Ascending aorta (tissue), 2 donors: ENCODE measurements at regions of chr3 and their contacts with region 1.

Region 1: GRCh38 chr3:66407611-66408218 is 93.1 kb downstream of the LRIG1 start:
- DNase-seq: peak in 1 of 2 donors; percentile 82
- H3K4me3 ChIP-seq: no peak overlapping the region
- H3K27ac ChIP-seq: peak overlapping the region; percentile 80 to 93
- H3K4me1 ChIP-seq: peaks cover 19 to 55% of the 10 kb centered on the region in 2 donors
- H3K27me3 ChIP-seq: no peaks in the 10 kb centered on the region
- CTCF ChIP-seq: peak; percentile 80 to 91 (median 87)

Region 2: DNA sequence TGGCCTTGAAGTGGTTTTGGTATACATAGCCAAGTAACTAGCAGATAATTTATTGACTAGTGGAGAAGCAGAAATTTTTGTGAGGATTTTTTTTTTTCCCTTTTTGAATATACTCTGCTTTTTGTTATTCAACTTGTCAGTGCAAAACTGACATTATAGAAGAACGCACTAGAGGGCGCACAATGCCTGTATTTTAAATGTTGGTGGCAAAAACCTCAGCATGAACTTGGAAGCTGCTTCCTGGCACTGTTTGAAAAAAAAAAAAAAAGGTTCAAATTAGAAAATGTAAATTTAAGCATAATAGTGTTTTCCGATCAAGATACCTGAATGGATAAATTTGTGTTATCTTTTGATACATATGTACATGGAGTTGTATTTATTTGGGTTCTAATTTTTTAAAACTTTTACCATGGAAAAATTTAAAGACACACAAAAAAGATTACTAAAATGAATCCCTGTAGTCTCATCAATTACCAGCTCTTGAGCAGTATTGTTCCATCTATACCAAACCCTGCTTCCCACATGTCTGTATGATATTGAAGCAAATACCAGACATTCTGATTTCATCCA is 130.9 kb before region 1 on chr3:
- intact Hi-C with region 1: loop called (anchors 5 kb)
- DNase-seq: peak in 1 of 2 donors; percentile 81
- H3K4me3 ChIP-seq: no peak overlapping the region
- H3K27ac ChIP-seq: no peak overlapping the region
- H3K4me1 ChIP-seq: no peaks in the 10 kb centered on the region
- H3K27me3 ChIP-seq: no peaks in the 10 kb centered on the region
- CTCF ChIP-seq: peak; percentile 55 to 67 (median 56)

Region 3: DNA sequence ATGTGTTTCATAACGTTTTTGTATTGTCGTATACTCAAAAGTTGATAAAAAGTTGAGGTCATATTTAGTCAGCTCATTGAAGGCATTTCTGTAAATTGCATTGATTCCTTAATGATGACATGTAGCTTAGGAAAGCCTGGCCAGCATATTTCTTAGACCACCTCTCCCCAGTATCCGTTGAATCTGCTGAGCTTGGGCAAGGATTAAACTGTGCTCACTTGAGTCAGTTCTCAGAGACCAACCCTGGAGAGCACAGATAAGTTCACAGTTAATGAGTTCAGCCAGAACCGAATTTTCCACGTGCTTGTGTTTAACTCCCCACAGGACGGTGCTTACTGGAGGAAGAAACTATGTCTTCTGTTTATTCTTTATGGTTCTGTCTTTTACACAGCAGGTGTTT is 54.2 kb before region 1 on chr3:
- intact Hi-C with region 1: no loop called
- DNase-seq: no peak
- H3K4me3 ChIP-seq: no peak overlapping the region
- H3K27ac ChIP-seq: no peak overlapping the region
- H3K4me1 ChIP-seq: no peaks in the 10 kb centered on the region
- H3K27me3 ChIP-seq: no peaks in the 10 kb centered on the region
- CTCF ChIP-seq: no peak

Region 4: DNA sequence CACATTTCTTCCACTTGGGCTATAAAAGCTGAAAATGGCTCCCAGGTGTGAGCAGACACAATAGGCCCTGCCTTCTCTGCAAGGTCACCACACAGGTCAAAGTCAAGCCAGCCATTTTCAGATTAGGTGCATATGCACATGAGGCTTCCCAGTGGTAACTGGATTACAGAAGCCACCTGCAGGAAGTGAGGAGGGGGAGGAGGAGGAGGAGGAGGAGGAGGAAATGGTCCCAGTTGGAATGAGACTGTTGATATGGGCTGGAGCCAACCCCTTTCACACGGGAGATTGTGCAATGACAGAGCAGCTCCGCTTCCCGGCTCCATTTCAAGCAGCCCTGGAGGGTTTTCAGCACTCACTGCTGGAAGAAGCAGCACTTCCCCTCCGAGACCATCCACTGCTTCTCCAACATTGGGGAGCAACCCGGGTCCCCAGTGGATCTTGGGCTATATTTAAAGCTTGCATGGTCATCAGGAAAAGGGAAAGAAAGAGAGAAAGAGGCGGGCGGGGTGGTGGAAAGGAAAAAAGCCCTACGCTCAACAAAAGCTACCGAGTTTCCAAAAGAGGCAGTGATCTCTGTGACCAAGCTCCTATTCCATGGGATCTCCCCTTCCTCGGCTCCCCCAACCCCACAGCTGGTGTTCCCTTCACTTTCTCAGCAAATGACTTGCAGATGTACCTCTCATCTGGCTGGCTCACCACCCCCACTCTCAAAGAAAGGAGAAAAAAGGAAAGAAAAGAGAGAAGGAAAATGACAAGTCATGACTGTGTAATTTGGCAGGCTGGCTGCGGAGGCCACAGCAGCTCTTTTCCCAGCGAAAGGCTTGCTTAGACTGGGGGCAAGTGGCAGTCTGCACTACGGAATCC is 34.8 kb after region 1 on chr3:
- intact Hi-C with region 1: loop called (anchors 5 kb)
- DNase-seq: peak in 1 of 2 donors; percentile 78
- H3K4me3 ChIP-seq: peak overlapping the region in 1 of 2 donors; percentile 43
- H3K27ac ChIP-seq: peak overlapping the region; percentile 72 to 80
- H3K4me1 ChIP-seq: peaks cover 13 to 41% of the 10 kb centered on the region in 2 donors
- H3K27me3 ChIP-seq: no peaks in the 10 kb centered on the region
- CTCF ChIP-seq: no peak

Region 5: GRCh38 chr3:66722675-66723074 is 315.0 kb after region 1 on chr3:
- intact Hi-C with region 1: loop called (anchors 10 kb)
- DNase-seq: peak; percentile 9 to 80
- H3K4me3 ChIP-seq: no peak overlapping the region
- H3K27ac ChIP-seq: peak overlapping the region; percentile 25 to 52
- H3K4me1 ChIP-seq: no peaks in the 10 kb centered on the region
- H3K27me3 ChIP-seq: no peaks in the 10 kb centered on the region
- CTCF ChIP-seq: no peak

Region 6: DNA sequence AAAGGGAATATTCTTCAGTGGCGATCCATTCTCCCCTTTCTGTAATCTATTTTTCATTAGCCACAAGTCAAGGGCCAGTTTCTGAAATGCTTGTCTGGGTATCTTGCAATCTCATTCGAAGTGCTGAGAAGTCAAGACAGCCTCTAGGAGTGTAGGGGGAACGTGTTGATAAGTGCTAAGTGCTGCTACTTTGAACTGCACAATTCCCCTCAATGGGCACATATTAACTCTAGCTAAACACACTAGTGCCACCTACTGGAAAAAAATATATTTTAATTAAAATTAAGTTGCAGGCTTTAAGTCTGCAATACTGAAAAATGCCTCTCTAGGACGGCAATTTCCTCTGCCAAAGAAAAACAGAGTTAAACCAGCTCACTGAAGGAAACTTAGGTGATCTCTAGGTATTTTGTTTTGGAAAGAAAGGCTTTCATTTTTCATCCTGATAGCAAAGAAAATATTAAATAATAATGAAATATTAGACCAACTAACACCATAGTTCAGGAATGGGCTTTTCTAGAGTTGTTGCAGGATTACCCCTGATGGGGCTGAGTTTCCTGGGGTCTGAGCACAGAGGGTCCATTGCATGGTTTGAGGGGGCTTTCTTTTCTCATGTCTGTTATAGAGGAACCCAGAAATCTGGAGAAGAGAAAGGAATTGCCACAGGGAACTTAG is 408.5 kb after region 1 on chr3:
- intact Hi-C with region 1: loop called (anchors 2 kb)
- DNase-seq: no peak
- H3K4me3 ChIP-seq: no peak overlapping the region
- H3K27ac ChIP-seq: no peak overlapping the region
- H3K4me1 ChIP-seq: no peaks in the 10 kb centered on the region
- H3K27me3 ChIP-seq: no peaks in the 10 kb centered on the region
- CTCF ChIP-seq: peak; percentile 48 to 73 (median 65)

Region 7: DNA sequence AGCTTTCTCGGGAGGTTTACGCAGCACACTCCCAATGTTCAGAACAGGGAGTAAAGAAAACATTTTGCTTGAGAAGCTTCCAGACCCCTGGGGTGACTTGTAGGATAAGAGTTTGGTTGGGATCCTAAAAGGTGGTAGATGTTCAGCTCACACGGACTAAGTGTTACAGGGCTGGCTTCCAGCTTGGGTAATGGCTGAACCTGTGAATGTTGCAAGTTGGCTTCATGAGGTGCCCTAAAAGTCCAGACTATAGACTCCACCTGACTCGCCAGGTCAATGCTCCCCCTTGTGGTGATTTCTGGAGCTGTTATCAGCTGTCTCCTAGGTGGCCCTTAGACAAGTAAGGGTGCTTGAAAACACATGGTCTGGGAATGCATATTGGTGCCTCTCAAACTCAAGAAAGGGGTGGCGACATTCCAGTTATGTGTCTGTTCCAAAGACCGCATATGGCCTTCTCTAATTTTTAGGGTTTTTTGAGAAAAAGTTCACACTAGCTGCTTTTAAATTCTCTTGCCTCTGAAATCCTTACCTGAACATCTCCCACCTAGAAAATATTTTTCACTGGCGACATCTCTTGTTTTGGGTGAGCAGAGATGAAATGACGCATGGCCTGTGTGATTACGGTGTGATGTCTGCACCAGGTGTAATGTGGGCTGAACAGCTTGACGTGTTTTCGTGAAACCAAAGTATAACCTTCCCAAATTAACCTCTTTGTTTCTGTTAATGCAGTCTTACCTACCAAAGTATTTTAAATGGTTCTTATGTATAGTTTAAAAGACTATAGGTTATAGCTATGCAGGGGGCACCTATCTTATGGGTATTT is 414.7 kb after region 1 on chr3:
- intact Hi-C with region 1: loop called (anchors 2 kb)
- DNase-seq: peak; percentile 8 to 71
- H3K4me3 ChIP-seq: no peak overlapping the region
- H3K27ac ChIP-seq: no peak overlapping the region
- H3K4me1 ChIP-seq: no peaks in the 10 kb centered on the region
- H3K27me3 ChIP-seq: no peaks in the 10 kb centered on the region
- CTCF ChIP-seq: peak; percentile 30 to 70 (median 66)